ENCODE measurements at regions of chr1 and their contacts with region 1.

Region 1: GRCh38 chr1:238485057-238485911 is 594.6 kb upstream of the ZP4 start:
- DNase-seq: no peak
- ATAC-seq: peak; percentile 58
- H3K4me3 ChIP-seq: peak overlapping the region in 1 of 3 experiments; percentile 4; a peak in 1 of 6 replicates
- H3K27ac ChIP-seq: no peak overlapping the region
- H3K4me1 ChIP-seq: no peaks in the 10 kb centered on the region
- H3K27me3 ChIP-seq: no peaks in the 10 kb centered on the region
- CTCF ChIP-seq: no peak
- EP300 ChIP-seq: no peak
- POLR2A ChIP-seq: no peak
- RAD21 ChIP-seq: no peak

Region 2: DNA sequence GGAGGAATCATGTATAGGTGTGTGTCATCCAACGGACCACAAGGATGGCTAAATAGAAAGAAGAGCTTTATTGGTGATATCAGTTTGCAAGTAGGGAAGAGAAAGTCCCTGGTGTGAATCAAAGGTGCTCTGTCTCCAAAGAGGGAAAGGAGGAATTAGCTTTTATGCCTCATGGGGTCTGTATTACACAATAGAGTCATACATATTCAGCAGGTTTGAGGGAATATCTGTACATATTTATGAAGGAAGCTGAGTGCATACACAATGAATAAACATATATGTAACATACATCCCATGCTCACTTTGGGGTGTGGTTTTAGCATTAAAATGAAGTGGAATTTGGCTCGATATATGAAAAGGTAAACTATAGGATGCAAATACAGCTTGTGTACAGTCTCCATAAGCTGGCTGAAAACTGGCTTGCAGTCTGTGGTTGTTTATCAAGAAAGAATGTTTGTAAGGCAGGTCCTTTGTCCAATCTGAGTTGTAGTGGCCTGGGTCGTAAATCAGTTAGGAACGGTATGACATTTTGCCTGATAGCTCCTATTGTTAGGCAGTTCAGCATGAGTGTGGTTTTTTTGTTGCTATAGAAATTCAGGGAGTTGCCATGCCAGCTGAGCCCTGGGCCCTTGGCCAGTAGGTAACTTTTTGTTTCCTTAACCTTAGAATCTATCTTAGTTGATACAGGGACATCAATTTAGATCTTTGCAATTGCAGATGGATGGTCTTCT is 396.6 kb before region 1 on chr1:
- CTCF ChIA-PET with region 1: no interaction called
- POLR2A ChIA-PET with region 1: no interaction called
- in situ Hi-C with region 1: no loop called
- intact Hi-C with region 1: no loop called
- DNase-seq: no peak
- ATAC-seq: no peak
- H3K4me3 ChIP-seq: no peak overlapping the region
- H3K27ac ChIP-seq: no peak overlapping the region
- H3K4me1 ChIP-seq: no peaks in the 10 kb centered on the region
- H3K27me3 ChIP-seq: no peaks in the 10 kb centered on the region
- CTCF ChIP-seq: no peak
- EP300 ChIP-seq: no peak
- POLR2A ChIP-seq: no peak
- RAD21 ChIP-seq: no peak

Region 3: GRCh38 chr1:238537641-238538040 is 52.4 kb after region 1 on chr1:
- CTCF ChIA-PET with region 1: no interaction called
- POLR2A ChIA-PET with region 1: no interaction called
- in situ Hi-C with region 1: no loop called
- intact Hi-C with region 1: loop called (anchors 2 kb)
- DNase-seq: no peak
- ATAC-seq: no peak
- H3K4me3 ChIP-seq: no peak overlapping the region
- H3K27ac ChIP-seq: no peak overlapping the region
- H3K4me1 ChIP-seq: no peaks in the 10 kb centered on the region
- H3K27me3 ChIP-seq: no peaks in the 10 kb centered on the region
- CTCF ChIP-seq: no peak
- EP300 ChIP-seq: no peak
- POLR2A ChIP-seq: no peak
- RAD21 ChIP-seq: no peak